Right lobe of liver (tissue), 6 donors: ENCODE measurements at regions of chr20 and their contacts with region 1.

Region 1: DNA sequence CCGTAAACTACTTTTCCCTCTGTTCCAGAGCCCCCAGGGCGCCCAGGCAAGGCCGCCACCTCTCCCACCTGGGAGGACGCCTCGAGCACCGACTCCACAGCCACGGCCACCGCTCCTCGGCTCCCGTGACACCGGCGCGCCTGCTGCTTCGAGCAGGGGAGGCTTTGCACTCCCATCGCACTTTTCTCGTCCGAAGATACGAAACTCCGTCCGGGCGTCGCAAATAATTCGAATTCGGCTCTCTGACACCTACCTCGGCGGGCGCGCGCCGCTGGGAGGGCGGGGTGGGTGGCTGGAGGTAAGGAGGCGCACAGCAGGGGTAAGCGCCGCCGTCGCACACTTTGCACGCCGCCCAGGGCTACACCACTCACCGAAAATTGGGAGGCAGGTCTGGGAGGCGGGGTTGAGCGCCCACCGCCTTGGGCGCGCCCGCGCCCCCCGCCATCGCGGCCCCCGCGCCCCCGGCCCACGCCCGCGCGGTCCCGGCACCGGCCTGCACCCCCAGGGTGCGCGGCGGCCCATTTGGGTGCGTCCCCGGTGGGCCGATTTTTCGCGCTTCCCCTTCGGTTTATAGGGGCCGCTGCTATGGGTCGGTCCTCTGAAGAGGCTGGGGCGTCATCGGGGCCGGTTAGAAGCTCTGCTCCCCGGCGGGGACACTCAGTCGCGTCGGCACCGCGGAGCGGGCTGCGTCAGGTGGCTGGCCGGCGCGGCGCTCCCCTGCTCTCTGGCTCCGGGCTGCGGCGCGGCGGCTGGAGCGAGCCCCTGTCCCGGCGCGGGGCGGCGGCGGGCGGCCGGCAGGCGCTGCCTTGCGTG is 36.2 kb downstream of the GNAS start:
- DNase-seq: peak; percentile 83 to 88 (median 84)
- ATAC-seq: peak; percentile 62 to 73 (median 66)
- H3K4me3 ChIP-seq: peak overlapping the region; percentile 44 to 71 (median 54)
- H3K27ac ChIP-seq: peak overlapping the region; percentile 44 to 81 (median 57)
- H3K4me1 ChIP-seq: peaks cover 0 to 10% (median 4%) of the 10 kb centered on the region in 4 donors
- H3K27me3 ChIP-seq: no peaks in the 10 kb centered on the region
- CTCF ChIP-seq: no peak
- POLR2A ChIP-seq: peak; percentile 97

Region 2: GRCh38 chr20:58692594-58693226 is 196.0 kb before region 1 on chr20 and contains the start of gene NPEPL1:
- intact Hi-C with region 1: no loop called
- DNase-seq: peak; percentile 72 to 82 (median 81)
- ATAC-seq: peak; percentile 85 to 92 (median 88)
- H3K4me3 ChIP-seq: peak within 1 kb of the TSS; percentile 52 to 65 (median 53)
- H3K27ac ChIP-seq: peak within 1 kb of the TSS; percentile 82 to 93 (median 89)
- H3K4me1 ChIP-seq: peaks cover 0 to 13% (median 3%) of the 10 kb centered on the region in 4 donors
- H3K27me3 ChIP-seq: no peaks in the 10 kb centered on the region
- CTCF ChIP-seq: peak in 2 of 4 donors; percentile 36 to 44
- POLR2A ChIP-seq: no peak
- total RNA-seq, gene NPEPL1: 7.7 to 13.9 (median 10.1) TPM

Region 3: GRCh38 chr20:59010995-59011873 is 122.5 kb after region 1 on chr20:
- intact Hi-C with region 1: loop called in 1 of 2 experiments (anchors 10 kb)
- DNase-seq: peak in 1 of 3 donors; percentile 36
- ATAC-seq: peak in 1 of 4 donors; percentile 10
- H3K4me3 ChIP-seq: no peak overlapping the region
- H3K27ac ChIP-seq: no peak overlapping the region
- H3K4me1 ChIP-seq: peaks cover 0 to 5% (median 1%) of the 10 kb centered on the region in 4 donors
- H3K27me3 ChIP-seq: no peaks in the 10 kb centered on the region
- CTCF ChIP-seq: no peak
- POLR2A ChIP-seq: no peak

Region 4: GRCh38 chr20:59042796-59043660 is 154.3 kb after region 1 on chr20:
- intact Hi-C with region 1: loop called (anchors 10 kb)
- DNase-seq: peak; percentile 95 to 97 (median 96)
- ATAC-seq: peak; percentile 95 to 98 (median 96)
- H3K4me3 ChIP-seq: peak overlapping the region; percentile 78 to 96 (median 93)
- H3K27ac ChIP-seq: peak overlapping the region; percentile 63 to 85 (median 76)
- H3K4me1 ChIP-seq: peaks cover 0 to 28% (median 7%) of the 10 kb centered on the region in 4 donors
- H3K27me3 ChIP-seq: no peaks in the 10 kb centered on the region
- CTCF ChIP-seq: peak in 2 of 4 donors; percentile 11 to 31
- POLR2A ChIP-seq: no peak